HepG2 (cell line): ENCODE measurements at regions of chr18 and their contacts with region 1.

Region 1: DNA sequence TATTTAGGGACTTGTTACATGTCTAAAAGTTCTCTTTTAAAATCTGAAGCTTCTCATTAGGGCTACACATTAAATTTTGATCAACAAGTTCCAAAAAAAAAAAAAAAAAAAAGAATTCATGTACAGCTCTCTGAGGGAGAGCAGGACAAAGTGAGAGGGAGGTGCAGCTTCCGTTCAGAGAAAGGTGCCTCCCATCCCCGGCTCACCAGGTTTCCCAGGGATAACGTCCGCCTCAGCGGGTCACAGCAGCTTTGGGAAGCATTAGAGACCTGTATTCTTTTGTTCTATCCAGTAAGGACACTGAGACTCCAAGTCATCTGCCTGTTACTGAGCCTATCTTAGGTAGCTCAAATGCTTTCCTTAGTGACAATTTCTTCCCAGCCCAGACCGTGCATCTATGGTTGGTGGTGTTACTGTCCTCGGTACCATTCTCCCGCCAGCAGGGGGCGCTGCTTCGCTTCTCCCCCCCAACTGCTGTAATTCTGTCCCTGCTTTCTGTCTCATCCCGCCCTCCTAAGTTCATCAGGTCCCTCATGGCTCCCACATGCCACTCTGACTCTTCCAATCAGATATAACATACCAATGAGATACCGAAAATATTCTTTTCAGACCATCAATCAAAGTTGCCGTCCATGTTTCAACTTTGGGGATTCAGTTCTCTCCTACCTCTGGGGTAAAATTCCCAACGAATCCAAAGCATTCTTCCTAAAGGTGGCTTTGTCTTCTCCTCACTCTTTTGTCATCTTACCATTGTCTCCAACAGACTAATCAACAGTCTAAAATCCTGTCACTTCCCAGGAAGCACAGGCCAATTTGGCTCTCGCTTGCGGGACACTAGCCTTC is 466.5 kb downstream of the METTL4 start:
- DNase-seq: peak; percentile 30
- ATAC-seq: peak; percentile 96
- H3K4me3 ChIP-seq: no peak overlapping the region
- H3K27ac ChIP-seq: no peak overlapping the region
- H3K4me1 ChIP-seq: no peaks in the 10 kb centered on the region
- H3K27me3 ChIP-seq: no peaks in the 10 kb centered on the region
- CTCF ChIP-seq: peak; percentile 87
- EP300 ChIP-seq: no peak
- POLR2A ChIP-seq: no peak
- RAD21 ChIP-seq: no peak

Region 2: DNA sequence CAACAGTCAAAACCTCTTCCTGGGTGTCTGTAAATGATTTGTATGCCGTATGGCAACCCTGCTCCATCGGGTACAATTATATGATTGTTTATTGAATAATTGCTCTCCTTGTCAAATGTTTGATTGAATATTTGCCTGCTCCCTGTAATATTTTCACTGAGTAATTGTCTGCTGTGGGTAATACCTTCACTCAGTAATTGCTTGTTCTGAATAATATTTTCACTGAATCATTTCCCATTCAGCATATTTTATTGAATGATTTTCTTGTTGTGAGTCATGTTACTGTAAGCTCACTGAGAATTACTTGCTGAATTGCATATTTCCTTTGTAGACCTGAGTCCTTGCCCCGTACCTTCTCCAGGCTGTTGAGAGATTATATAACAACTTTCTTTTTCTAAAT is 68.8 kb before region 1 on chr18:
- CTCF ChIA-PET with region 1: no interaction called
- POLR2A ChIA-PET with region 1: no interaction called
- in situ Hi-C with region 1: no loop called
- intact Hi-C with region 1: no loop called
- DNase-seq: no peak
- ATAC-seq: no peak
- H3K4me3 ChIP-seq: no peak overlapping the region
- H3K27ac ChIP-seq: no peak overlapping the region
- H3K4me1 ChIP-seq: no peaks in the 10 kb centered on the region
- H3K27me3 ChIP-seq: no peaks in the 10 kb centered on the region; a peak in 1 of 5 replicates
- CTCF ChIP-seq: no peak
- EP300 ChIP-seq: no peak
- POLR2A ChIP-seq: no peak
- RAD21 ChIP-seq: no peak

Region 3: DNA sequence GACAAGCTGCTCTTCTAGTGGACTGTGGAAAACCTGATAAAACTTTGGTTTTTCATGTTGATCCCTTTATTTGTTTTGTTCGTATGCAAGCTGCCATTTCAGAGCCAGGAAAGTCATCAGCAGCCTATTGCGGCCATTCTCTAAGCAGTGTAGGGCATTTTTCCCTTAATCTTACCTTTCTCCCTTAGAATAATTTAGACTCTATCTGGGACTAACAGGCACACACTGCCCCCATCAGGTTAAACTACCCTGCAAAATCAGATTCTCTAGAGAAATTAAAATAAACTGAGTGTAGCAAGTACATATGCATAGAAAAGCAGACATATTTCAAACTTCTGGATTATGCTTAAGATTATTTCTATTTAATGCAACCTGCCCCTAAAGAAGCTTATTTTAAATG is 119.0 kb after region 1 on chr18:
- CTCF ChIA-PET with region 1: interaction called, 6 read pairs
- POLR2A ChIA-PET with region 1: no interaction called
- in situ Hi-C with region 1: no loop called
- intact Hi-C with region 1: loop called (anchors 1 kb)
- DNase-seq: peak; percentile 11
- ATAC-seq: peak; percentile 52
- H3K4me3 ChIP-seq: no peak overlapping the region
- H3K27ac ChIP-seq: no peak overlapping the region
- H3K4me1 ChIP-seq: no peaks in the 10 kb centered on the region
- H3K27me3 ChIP-seq: no peaks in the 10 kb centered on the region; a peak in 1 of 5 replicates
- CTCF ChIP-seq: peak; percentile 54
- EP300 ChIP-seq: no peak
- POLR2A ChIP-seq: no peak
- RAD21 ChIP-seq: no peak

Region 4: GRCh38 chr18:2536493-2536892 is 431.7 kb after region 1 on chr18:
- CTCF ChIA-PET with region 1: interaction called, 3 read pairs
- POLR2A ChIA-PET with region 1: no interaction called
- in situ Hi-C with region 1: loop called (anchors 10 kb)
- intact Hi-C with region 1: no loop called
- DNase-seq: no peak
- ATAC-seq: no peak
- H3K4me3 ChIP-seq: no peak overlapping the region
- H3K27ac ChIP-seq: no peak overlapping the region
- H3K4me1 ChIP-seq: no peaks in the 10 kb centered on the region
- H3K27me3 ChIP-seq: no peaks in the 10 kb centered on the region
- CTCF ChIP-seq: no peak
- EP300 ChIP-seq: no peak
- POLR2A ChIP-seq: no peak
- RAD21 ChIP-seq: no peak

Region 5: DNA sequence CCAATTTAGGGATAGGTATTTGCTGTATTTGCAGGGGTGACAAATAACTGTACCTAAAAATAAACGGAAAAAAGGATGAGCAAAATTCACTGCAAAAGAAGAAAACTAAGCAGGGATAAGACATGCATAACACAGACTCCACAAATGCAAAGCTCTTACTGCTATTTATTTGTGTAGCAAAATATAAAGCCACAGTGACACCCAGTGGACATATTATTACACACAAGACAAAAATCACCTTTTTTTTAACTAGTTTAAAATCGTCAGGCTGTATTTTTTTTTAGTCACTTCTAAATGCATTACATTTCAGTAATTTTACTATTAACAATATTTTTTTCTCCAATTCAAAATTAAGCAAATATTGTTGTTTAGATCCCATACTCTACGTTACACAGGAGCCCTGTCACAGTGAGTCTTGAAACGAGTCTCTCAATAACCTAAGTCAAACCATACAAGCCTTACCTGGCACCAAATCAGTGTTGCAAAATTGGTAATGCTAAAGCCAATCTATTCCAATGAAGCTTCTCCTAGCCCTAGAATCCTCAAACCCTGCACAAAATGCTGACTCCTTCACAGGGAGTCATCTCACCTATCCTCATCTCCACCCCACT is 442.7 kb after region 1 on chr18:
- CTCF ChIA-PET with region 1: interaction called, 4 read pairs
- POLR2A ChIA-PET with region 1: no interaction called
- in situ Hi-C with region 1: no loop called
- intact Hi-C with region 1: loop called (anchors 2 kb)
- DNase-seq: peak; percentile 20
- ATAC-seq: peak; percentile 48; the same call in 2 of the 3 replicates
- H3K4me3 ChIP-seq: no peak overlapping the region
- H3K27ac ChIP-seq: no peak overlapping the region
- H3K4me1 ChIP-seq: no peaks in the 10 kb centered on the region
- H3K27me3 ChIP-seq: no peaks in the 10 kb centered on the region
- CTCF ChIP-seq: peak; percentile 47
- EP300 ChIP-seq: no peak
- POLR2A ChIP-seq: no peak
- RAD21 ChIP-seq: no peak